ENCODE measurements at regions of chr1 and their contacts with region 1.

Region 1: DNA sequence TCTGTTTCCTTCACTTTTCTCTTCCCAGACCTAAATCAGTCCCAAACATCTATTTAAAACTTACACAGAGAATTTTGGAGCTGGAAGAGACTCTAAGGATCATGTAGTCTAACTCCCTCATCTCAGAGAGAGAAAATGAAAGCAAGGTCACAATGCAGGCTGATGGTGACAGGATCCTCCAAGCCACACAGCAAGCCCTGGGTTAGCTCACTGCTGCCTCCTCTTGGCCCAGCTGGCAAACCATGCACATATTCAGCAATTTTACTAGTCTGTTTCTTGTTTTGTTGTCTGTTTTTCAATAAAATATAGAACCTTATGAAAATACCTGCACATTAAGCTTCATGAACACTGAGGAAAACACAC is 27.7 kb upstream of the LY9 start:
- DNase-seq: peak; percentile 79
- H3K4me3 Mint-ChIP-seq: peak overlapping the region; percentile 83
- H3K27ac Mint-ChIP-seq: peak overlapping the region; percentile 89
- H3K4me1 Mint-ChIP-seq: peaks cover 49% of the 10 kb centered on the region
- H3K27me3 Mint-ChIP-seq: no peaks in the 10 kb centered on the region

Region 2: GRCh38 chr1:160251687-160252526 is 516.4 kb before region 1 on chr1:
- intact Hi-C with region 1: no loop called
- DNase-seq: peak; percentile 36
- H3K4me3 Mint-ChIP-seq: no peak overlapping the region
- H3K27ac Mint-ChIP-seq: peak overlapping the region; percentile 68
- H3K4me1 Mint-ChIP-seq: peaks cover 13% of the 10 kb centered on the region
- H3K27me3 Mint-ChIP-seq: no peaks in the 10 kb centered on the region

Region 3: DNA sequence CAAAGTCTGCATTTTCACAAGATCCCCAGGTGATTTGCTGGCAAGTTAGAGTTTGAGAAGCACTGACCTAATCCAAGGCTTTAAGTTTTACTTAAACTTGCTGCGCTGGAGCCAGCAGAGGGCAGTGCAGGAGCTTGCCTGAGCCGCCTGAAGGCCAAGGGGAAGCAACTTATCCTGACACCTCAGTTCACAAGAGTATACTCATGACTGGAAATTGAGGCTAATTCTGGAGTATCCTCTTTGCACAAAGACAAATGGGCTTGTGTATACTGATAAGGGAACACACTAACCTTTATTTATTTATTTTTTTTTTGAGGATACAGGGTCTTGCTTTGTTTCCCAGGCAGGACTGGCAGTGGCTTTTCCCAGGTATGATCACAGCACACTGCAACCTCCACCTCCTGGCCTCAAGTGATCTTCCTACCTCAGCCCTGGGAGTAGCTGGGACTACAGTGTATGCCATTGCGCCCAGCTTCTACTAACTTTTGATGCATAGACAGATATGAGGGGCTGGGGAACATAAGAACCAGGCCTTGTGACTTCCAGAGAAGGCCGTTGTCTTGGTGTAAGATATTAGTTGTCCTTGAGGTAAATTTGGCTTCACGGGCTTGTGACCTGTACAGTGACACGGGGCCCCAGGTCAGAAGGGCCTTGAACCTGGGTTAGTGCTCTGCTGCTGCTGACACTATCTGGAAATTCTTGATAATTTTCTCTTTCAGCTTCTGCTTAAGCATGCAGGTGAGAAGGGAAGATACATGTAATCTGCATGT is 92.5 kb before region 1 on chr1:
- intact Hi-C with region 1: loop called (anchors 1 kb)
- DNase-seq: peak; percentile 68
- H3K4me3 Mint-ChIP-seq: peak overlapping the region; percentile 19
- H3K27ac Mint-ChIP-seq: peak overlapping the region; percentile 42
- H3K4me1 Mint-ChIP-seq: peaks cover 47% of the 10 kb centered on the region
- H3K27me3 Mint-ChIP-seq: no peaks in the 10 kb centered on the region

Region 4: DNA sequence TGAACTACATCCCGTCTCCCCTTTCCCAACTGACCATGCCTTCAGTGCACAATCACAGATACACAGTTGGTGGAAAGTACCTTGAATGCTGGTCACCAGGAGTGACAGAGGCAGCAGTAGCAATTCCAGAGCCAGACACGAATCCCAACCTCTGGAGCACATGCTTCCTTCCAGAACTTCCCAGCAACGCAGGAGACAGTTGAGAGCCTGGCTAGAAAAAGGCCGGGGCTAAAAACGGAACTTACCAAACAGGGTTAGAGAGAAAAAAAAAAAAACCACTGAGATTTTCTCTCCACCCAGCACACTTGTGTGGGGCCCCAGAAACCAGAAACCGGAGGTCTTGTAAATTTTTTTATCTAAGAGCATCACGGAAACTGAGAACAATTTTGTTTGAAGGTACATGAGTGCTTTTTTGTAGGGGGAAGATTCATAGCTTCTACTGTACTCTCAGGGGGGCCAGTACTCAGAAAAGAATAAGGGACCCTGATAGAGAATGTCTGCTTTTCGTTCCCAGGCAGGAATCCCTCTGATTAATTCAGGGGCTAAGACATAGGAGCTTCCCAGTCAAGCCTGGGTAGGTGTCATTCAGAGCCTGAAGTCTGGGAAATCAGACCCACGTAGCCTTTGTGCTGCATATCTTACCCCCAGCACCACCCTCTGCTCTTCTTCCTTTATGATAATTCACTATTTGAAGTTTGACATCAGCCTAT is 56.5 kb before region 1 on chr1 and contains the start of gene CD48:
- intact Hi-C with region 1: loop called (anchors 1 kb)
- DNase-seq: peak; percentile 41
- H3K4me3 Mint-ChIP-seq: no peak within 1 kb of the TSS
- H3K27ac Mint-ChIP-seq: no peak within 1 kb of the TSS
- H3K4me1 Mint-ChIP-seq: peaks cover 26% of the 10 kb centered on the region
- H3K27me3 Mint-ChIP-seq: no peaks in the 10 kb centered on the region
- total RNA-seq, gene CD48: 219 and 222 TPM in 2 replicates

Region 5: DNA sequence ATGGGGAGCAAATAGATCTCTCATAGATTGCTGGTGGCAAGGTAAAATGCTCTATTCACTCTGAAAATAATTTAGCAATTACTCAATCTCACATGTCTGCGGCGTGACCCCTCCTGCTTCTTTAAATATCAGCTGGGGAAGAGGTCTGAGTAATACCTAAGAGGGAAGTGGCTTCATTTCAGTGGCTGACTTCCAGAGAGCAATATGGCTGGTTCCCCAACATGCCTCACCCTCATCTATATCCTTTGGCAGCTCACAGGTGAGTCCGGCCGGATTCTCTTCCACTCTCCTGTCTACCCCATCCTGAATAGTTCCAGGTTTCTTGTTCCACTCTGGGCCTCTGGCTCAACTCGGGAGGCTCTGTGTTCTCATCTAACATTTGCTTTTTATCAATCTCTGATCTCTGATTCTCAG is 29.2 kb before region 1 on chr1 and contains the start of gene SLAMF7:
- intact Hi-C with region 1: loop called (anchors 1 kb)
- DNase-seq: no peak
- H3K4me3 Mint-ChIP-seq: peak within 1 kb of the TSS; percentile 90
- H3K27ac Mint-ChIP-seq: peak within 1 kb of the TSS; percentile 95
- H3K4me1 Mint-ChIP-seq: peaks cover 68% of the 10 kb centered on the region
- H3K27me3 Mint-ChIP-seq: no peaks in the 10 kb centered on the region
- total RNA-seq, gene SLAMF7: 43.7 and 53.6 TPM in 2 replicates

Region 6: DNA sequence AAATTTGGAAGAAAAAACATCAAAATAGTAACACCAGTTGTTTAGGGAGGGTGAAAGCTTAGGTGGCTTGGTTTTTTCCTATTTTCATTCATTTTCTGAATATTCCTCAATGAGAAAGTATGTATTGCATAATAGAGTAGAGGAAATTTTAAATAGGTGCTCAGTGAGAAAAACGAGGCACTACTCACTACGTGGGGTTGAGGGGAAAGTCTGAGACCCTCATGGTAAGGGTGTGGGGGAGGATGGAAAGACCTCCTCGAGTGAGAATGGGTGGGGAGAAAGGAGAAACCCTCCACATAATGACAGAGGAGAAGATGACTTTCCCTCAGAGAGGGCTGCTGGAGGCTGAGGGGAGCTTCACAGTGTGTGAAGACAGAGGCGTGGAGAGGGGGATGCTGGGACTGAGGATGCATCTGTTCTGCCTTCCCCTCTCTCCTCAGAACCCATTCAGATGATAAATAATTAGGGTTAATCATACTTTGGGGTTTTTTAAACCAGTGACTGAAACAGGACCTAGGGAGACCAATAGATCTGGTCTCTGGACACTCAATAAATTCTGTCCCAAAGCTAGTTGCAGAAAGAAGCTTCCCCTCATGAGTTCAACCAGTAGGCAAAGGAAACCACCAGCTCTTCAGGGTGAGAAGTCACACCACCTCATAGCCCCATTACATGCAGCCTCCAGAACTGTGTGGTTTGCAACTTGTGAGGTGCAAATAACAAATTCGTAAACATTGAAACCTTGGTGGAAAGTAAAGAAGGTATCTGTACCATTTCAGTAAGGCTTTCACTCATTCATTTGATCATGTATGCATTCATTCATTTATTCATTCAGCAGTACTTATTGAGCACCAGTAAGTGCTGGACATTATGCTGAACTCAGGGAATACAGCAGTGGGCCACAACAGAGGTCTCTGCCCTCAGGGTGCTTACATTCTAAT is 12.1 kb before region 1 on chr1:
- intact Hi-C with region 1: loop called (anchors 1 kb)
- DNase-seq: no peak
- H3K4me3 Mint-ChIP-seq: peak overlapping the region; percentile 21
- H3K27ac Mint-ChIP-seq: peak overlapping the region; percentile 75
- H3K4me1 Mint-ChIP-seq: peaks cover 65% of the 10 kb centered on the region
- H3K27me3 Mint-ChIP-seq: no peaks in the 10 kb centered on the region

Region 7: GRCh38 chr1:160877221-160877620 is 108.9 kb after region 1 on chr1:
- intact Hi-C with region 1: loop called (anchors 5 kb)
- DNase-seq: no peak
- H3K4me3 Mint-ChIP-seq: no peak overlapping the region
- H3K27ac Mint-ChIP-seq: no peak overlapping the region
- H3K4me1 Mint-ChIP-seq: peaks cover 16% of the 10 kb centered on the region
- H3K27me3 Mint-ChIP-seq: no peaks in the 10 kb centered on the region